A549 (cell line): ENCODE measurements at regions of chr17 and their contacts with region 1.

Region 1: GRCh38 chr17:7515911-7516610 is 31.9 kb downstream of the POLR2A start:
- DNase-seq: peak in 1 of 2 experiments; percentile 33
- ATAC-seq: no peak
- H3K4me3 ChIP-seq: no peak overlapping the region
- H3K27ac ChIP-seq: no peak overlapping the region
- H3K4me1 ChIP-seq: no peaks in the 10 kb centered on the region
- CTCF ChIP-seq: no peak
- EP300 ChIP-seq: no peak
- POLR2A ChIP-seq: no peak
- RAD21 ChIP-seq: no peak

Region 2: DNA sequence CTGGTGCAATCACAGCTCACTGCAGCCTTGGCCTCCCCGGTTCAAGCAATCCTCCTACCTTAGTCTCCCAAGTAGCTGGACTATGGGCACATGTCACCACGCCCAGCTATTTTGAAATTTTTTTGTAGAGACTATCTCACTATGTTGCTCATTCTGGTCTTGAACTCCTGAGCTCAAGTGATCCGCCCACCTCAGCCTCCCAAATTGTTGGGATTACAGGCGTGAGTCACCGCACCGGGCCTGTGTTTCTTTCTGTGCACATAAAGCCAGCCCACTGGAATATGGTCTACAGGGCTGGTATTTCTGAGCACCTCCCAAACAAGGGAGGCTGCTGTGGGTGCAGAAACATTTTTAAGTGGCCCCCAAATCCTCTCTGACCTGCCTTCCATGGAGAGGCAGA is 152.8 kb before region 1 on chr17:
- CTCF ChIA-PET with region 1: no interaction called
- POLR2A ChIA-PET with region 1: no interaction called
- DNase-seq: peak in 1 of 2 experiments; percentile 52
- ATAC-seq: peak; percentile 45 to 69; a peak in 4 of 6 replicates
- H3K4me3 ChIP-seq: no peak overlapping the region
- H3K27ac ChIP-seq: no peak overlapping the region
- H3K4me1 ChIP-seq: peaks cover 7% of the 10 kb centered on the region; the same call in 2 of the 3 replicates
- CTCF ChIP-seq: no peak
- EP300 ChIP-seq: no peak
- POLR2A ChIP-seq: no peak
- RAD21 ChIP-seq: no peak

Region 3: DNA sequence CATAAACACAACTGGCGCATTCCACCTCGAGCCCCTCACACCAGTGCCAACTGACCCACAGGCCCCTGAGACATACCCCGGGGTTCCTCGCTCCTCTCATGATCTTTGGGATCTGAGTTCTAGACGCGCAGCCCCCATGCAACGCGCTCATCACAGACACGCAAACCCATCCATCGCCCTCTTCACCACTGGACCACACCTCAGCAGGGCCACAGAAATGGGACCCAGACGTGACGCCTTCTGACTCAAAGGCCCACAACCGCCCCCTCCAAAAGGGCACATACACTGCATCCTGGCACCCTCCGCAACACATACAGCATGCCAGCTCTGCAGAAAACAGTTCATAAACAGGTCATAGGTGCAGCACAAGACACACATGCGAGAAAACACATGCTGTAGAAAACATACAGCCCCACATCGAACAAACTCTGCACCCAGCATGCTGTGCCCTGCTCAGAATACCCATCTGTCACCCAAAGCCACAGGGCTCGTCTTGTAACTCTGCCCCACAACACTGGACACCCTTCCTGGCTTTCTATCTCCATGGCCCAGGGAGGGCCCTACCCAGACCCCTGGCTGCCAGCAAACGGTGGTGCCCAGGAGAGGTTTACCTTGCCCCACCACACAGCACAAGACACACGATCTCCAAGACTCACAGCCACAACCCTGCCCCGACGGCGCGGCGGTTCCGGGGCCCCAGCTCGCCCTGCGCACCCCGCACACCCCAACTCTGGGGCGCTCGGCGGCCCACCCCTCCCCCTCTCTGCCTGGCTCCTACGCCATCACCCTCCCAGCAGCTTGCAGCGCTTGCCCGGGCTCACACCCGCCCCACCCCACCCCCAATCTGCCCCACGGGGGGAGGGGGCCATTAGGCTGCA is 37.5 kb before region 1 on chr17:
- CTCF ChIA-PET with region 1: interaction called, 13 read pairs
- POLR2A ChIA-PET with region 1: interaction called, 13 read pairs
- DNase-seq: peak; percentile 50 to 65
- ATAC-seq: peak; percentile 40 to 48
- H3K4me3 ChIP-seq: peak overlapping the region; percentile 82
- H3K27ac ChIP-seq: peak overlapping the region; percentile 94 to 100
- H3K4me1 ChIP-seq: peaks cover 42% of the 10 kb centered on the region
- CTCF ChIP-seq: no peak
- EP300 ChIP-seq: no peak
- POLR2A ChIP-seq: no peak
- RAD21 ChIP-seq: no peak

Region 4: GRCh38 chr17:7491583-7491982 is 24.5 kb before region 1 on chr17:
- CTCF ChIA-PET with region 1: interaction called, 72 read pairs
- POLR2A ChIA-PET with region 1: no interaction called
- DNase-seq: no peak
- ATAC-seq: no peak
- H3K4me3 ChIP-seq: no peak overlapping the region
- H3K27ac ChIP-seq: no peak overlapping the region
- H3K4me1 ChIP-seq: peaks cover 29% of the 10 kb centered on the region; the same call in 2 of the 3 replicates
- CTCF ChIP-seq: no peak
- EP300 ChIP-seq: no peak
- POLR2A ChIP-seq: no peak
- RAD21 ChIP-seq: no peak

Region 5: GRCh38 chr17:7530023-7530900 is 14.2 kb after region 1 on chr17:
- CTCF ChIA-PET with region 1: interaction called, 66 read pairs
- POLR2A ChIA-PET with region 1: no interaction called
- DNase-seq: no peak
- ATAC-seq: no peak
- H3K4me3 ChIP-seq: no peak overlapping the region
- H3K27ac ChIP-seq: no peak overlapping the region
- H3K4me1 ChIP-seq: 0 out of 3 replicates have a peak, but pooled peaks cover 3% of the 10 kb centered on the region
- CTCF ChIP-seq: no peak
- EP300 ChIP-seq: no peak
- POLR2A ChIP-seq: no peak
- RAD21 ChIP-seq: no peak

Region 6: DNA sequence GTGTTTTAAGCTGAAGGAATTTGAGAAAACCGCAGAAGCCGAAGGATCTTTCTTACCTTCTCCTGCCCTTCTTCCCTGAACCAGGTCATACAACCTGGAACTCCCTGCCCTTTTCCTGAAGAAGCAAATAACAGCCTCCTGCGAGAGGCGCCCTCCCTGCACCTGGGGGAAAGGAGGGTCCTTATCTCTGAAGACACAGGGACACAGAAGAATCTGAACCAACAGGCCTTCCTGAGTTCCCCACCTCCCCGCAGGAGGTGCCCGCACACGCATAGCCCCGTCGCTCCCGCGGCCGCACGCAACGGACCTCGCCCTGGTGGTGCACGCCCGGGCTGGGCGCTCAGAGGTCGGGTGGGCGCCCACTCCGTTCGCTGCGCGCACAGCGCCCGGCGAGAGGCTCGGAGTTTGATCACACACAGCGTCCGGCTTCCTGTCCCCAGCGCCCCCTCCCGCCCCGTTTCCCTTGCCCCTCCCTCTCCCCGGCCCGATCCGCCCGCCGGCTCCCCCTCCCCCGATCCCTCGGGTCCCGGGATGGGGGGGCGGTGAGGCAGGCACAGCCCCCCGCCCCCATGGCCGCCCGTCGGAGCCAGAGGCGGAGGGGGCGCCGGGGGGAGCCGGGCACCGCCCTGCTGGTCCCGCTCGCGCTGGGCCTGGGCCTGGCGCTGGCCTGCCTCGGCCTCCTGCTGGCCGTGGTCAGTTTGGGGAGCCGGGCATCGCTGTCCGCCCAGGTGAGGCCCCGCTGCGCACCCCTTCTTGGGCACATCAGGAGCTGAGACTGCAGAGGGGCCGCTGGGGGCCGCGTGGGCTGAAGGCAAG is 32.7 kb after region 1 on chr17 and contains the start of gene TNFSF12:
- CTCF ChIA-PET with region 1: interaction called, 232 read pairs
- POLR2A ChIA-PET with region 1: no interaction called
- DNase-seq: peak in 1 of 2 experiments; percentile 42
- ATAC-seq: peak; percentile 89
- H3K4me3 ChIP-seq: peak within 1 kb of the TSS; percentile 63
- H3K27ac ChIP-seq: peak within 1 kb of the TSS; percentile 81 to 90
- H3K4me1 ChIP-seq: peaks cover 17% of the 10 kb centered on the region
- CTCF ChIP-seq: peak; percentile 19; the same call in 1 of the 3 replicates
- EP300 ChIP-seq: no peak
- POLR2A ChIP-seq: peak; percentile 82
- RAD21 ChIP-seq: no peak
- polyA plus RNA-seq, gene TNFSF12: 11.9 and 12.4 TPM in 2 replicates

Region 7: DNA sequence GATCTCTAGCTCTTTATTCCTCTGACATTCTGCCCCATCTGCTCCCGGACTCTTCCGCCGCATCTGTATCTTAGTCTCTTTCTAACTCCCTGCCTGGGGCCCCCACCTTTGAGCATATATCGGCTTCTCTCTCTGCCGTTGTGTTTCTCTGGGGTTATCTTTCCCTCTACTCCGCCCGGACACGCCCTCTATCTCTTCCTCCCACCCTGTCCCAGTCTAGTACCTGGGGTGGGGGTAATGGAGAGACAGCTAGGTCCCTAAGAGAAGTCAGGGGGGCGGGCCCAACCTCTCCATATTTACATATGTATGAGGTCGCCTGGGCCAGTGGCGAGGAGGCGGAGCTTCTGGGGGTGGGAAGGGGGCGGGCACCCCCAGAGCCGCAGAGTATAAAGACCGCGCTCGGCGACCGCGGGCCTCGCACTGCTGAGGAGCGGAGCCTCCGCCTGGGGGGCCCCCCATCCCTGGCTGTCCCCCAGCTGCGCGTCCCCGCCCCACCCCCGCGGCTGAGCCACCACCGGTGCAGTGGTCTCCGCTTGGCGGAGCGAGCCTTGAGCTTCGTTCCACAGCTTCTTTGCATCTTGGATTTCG is 134.5 kb after region 1 on chr17 and contains the start of gene ATP1B2:
- CTCF ChIA-PET with region 1: no interaction called
- POLR2A ChIA-PET with region 1: no interaction called
- DNase-seq: peak; percentile 59 to 90
- ATAC-seq: peak; percentile 63 to 85
- H3K4me3 ChIP-seq: peak within 1 kb of the TSS; percentile 59
- H3K27ac ChIP-seq: peak within 1 kb of the TSS in 1 of 2 experiments; percentile 58; a peak in 4 of 6 replicates
- H3K4me1 ChIP-seq: peaks cover 16% of the 10 kb centered on the region; the same call in 1 of the 3 replicates
- CTCF ChIP-seq: no peak
- EP300 ChIP-seq: no peak
- POLR2A ChIP-seq: no peak
- RAD21 ChIP-seq: no peak
- polyA plus RNA-seq, gene ATP1B2: 0.16 and 0.20 TPM in 2 replicates